Heart right ventricle (tissue), 16 donors: ENCODE measurements at regions of chr7 and their contacts with region 1.

Region 1: DNA sequence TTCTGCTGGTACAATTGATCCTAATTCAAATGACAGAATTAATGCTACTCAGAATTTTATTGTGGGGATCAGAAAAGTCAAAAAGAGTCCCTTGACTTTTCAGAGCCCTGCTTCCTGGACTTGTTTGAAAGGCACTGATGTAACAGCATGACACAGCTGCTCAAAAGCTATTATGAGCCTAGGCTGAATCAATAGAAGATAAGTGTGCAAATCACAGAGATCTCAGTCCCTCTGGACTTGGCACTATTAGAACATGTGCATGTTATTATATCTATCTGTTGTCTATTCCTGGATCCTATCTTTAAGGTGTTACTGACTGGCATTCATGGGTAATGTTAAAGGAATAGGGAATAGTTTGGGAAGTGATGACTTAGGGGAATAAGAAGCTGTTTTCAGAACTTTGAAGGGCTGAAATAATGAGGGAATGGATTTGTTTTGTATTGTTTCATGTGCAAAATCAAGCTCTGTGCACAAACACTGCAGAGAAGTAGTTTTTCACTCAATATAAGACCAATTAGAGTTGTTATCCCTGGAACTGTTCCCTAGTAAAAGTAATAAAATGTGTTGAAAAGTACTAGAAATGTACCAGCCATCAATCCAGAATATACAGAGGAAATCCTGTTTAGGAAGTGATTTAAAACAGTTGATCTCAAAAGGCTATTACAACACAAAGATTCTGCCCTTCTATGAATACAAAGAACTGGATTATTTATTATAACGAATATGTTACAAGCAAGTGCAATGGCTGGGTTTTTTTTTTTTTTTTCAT is 814.9 kb upstream of the C7orf33 start:
- DNase-seq: no peak
- ATAC-seq: no peak
- H3K4me3 ChIP-seq: no peak overlapping the region
- H3K27ac ChIP-seq: no peak overlapping the region
- H3K4me1 ChIP-seq: no peaks in the 10 kb centered on the region
- H3K27me3 ChIP-seq: no peaks in the 10 kb centered on the region
- CTCF ChIP-seq: no peak

Region 2: DNA sequence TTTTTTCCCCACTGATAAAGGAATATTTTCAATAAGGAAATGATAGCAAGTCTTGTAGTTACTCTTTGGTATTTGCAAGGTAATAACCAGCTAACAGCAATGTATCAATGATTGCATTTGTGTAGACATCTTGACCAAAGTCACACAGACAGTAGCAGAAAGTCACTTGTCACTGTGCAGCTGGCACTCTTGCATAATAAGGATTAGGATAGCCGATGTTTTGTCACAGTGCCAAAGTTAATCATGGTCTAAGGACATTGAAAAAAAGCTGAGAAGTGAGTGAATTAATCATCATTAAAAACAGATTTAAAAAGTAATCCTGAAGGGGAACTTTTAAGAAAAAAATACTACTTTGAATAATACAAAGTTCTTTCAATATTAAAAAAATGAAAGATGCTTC is 19.4 kb before region 1 on chr7:
- intact Hi-C with region 1: loop called in 1 of 10 experiments (anchors 2 kb)
- DNase-seq: no peak
- ATAC-seq: no peak
- H3K4me3 ChIP-seq: no peak overlapping the region
- H3K27ac ChIP-seq: no peak overlapping the region
- H3K4me1 ChIP-seq: no peaks in the 10 kb centered on the region
- H3K27me3 ChIP-seq: no peaks in the 10 kb centered on the region
- CTCF ChIP-seq: no peak